ENCODE measurements at regions of chr1 and their contacts with region 1.

Region 1: DNA sequence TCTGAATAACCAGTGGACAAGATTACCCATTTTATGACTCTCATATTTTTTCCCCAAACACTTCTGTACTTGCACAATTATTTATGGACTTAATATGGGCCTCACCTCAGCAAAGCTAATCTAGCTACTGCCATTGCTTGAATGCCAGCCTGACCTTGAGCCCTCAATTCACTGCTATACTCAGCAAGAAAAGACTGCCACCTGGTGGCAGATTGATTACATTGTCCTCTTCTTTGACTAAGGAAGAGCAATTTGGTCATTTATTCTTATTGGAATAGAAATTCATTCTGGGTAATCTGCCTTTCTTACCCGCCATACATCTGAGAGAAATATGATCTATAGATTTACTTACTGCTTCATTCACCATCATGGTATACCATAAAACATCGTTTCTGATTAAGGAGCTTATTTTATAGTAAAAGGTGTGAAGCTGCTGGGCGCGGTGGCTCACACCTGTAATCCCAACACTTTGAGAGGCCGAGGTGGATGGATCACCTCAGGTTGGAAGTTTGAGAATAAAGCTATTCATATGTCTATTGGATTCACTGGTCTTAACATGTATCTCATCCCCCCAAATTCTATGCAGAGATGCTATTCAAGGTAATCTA is 32.9 kb upstream of the DIPK1A start:
- DNase-seq: no peak
- ATAC-seq: peak; percentile 98
- H3K4me3 ChIP-seq: no peak overlapping the region
- H3K27ac ChIP-seq: no peak overlapping the region
- H3K4me1 ChIP-seq: no peaks in the 10 kb centered on the region
- H3K27me3 ChIP-seq: no peaks in the 10 kb centered on the region
- CTCF ChIP-seq: peak; percentile 65 to 81 (median 73)
- EP300 ChIP-seq: no peak
- POLR2A ChIP-seq: no peak
- RAD21 ChIP-seq: peak; percentile 100

Region 2: DNA sequence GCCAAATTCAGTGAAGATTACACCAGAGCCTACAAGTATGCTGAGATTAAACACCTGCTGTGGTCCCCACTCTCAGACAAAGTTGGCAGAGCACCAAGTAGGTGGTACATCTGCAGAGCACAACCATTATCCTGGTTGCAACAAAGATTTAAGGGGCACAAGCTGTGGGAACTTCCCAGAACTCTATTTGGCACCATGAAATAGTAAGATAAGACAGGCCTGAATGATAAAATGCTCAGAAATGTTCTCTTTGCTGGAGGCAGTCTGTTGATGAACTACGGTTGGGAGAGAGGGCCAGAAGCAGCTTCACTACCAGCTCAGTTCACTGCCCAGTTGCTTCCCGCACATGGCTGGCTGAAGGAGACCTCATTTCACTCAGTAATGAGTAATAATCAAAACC is 142.5 kb before region 1 on chr1:
- CTCF ChIA-PET with region 1: interaction called, 165 read pairs
- POLR2A ChIA-PET with region 1: no interaction called
- RAD21 ChIA-PET with region 1: interaction called, 67 read pairs
- SMC1A ChIA-PET with region 1: interaction called, 120 read pairs
- in situ Hi-C with region 1: loop called (anchors 5 kb)
- intact Hi-C with region 1: no loop called
- DNase-seq: no peak
- ATAC-seq: no peak
- H3K4me3 ChIP-seq: no peak overlapping the region
- H3K27ac ChIP-seq: no peak overlapping the region
- H3K4me1 ChIP-seq: peaks cover 6% of the 10 kb centered on the region
- H3K27me3 ChIP-seq: no peaks in the 10 kb centered on the region
- CTCF ChIP-seq: no peak
- EP300 ChIP-seq: no peak
- POLR2A ChIP-seq: no peak
- RAD21 ChIP-seq: no peak

Region 3: GRCh38 chr1:92877792-92878191 is 116.4 kb before region 1 on chr1:
- CTCF ChIA-PET with region 1: interaction called, 17 read pairs
- POLR2A ChIA-PET with region 1: no interaction called
- RAD21 ChIA-PET with region 1: interaction called, 3 read pairs
- SMC1A ChIA-PET with region 1: interaction called, 4 read pairs
- in situ Hi-C with region 1: no loop called
- intact Hi-C with region 1: no loop called
- DNase-seq: no peak
- ATAC-seq: no peak
- H3K4me3 ChIP-seq: peak overlapping the region; percentile 43; the same call in 1 of the 2 replicates
- H3K27ac ChIP-seq: peak overlapping the region; percentile 55
- H3K4me1 ChIP-seq: no peaks in the 10 kb centered on the region; the same call in 1 of the 2 replicates
- H3K27me3 ChIP-seq: no peaks in the 10 kb centered on the region
- CTCF ChIP-seq: no peak
- EP300 ChIP-seq: no peak
- POLR2A ChIP-seq: no peak
- RAD21 ChIP-seq: no peak

Region 4: DNA sequence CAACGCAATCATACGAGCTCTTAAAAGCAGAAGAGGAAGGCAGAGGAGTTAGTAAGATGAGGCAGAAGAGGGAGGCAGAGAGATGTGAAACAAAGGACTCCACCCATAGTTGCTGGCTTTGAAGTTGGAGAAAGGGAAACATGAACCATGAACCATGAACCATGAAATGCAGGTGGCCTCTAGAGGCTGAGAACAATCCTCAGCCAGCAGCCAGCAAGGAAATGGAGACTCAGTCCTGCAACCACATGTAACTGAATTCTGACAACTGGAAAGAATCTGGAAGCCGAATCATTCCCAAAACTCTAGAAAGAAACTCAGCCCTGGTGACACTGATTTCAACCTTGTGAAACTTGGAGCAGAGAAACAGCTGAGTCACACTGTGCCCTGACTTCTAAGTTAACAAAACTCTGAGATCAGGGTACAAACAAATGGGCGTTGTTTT is 43.0 kb before region 1 on chr1:
- CTCF ChIA-PET with region 1: interaction called, 39 read pairs
- POLR2A ChIA-PET with region 1: interaction called, 5 read pairs
- RAD21 ChIA-PET with region 1: interaction called, 133 read pairs
- SMC1A ChIA-PET with region 1: interaction called, 141 read pairs
- in situ Hi-C with region 1: no loop called
- intact Hi-C with region 1: no loop called
- DNase-seq: peak; percentile 79
- ATAC-seq: peak; percentile 80
- H3K4me3 ChIP-seq: 0 out of 2 replicates have a peak overlapping the region, but pooled peaks have one; percentile 0
- H3K27ac ChIP-seq: peak overlapping the region; percentile 79
- H3K4me1 ChIP-seq: peaks cover 37% of the 10 kb centered on the region
- H3K27me3 ChIP-seq: no peaks in the 10 kb centered on the region
- CTCF ChIP-seq: peak in 2 of 3 experiments; percentile 21 to 31; a peak in 3 of 6 replicates
- EP300 ChIP-seq: no peak
- POLR2A ChIP-seq: no peak
- RAD21 ChIP-seq: peak; percentile 29

Region 5: DNA sequence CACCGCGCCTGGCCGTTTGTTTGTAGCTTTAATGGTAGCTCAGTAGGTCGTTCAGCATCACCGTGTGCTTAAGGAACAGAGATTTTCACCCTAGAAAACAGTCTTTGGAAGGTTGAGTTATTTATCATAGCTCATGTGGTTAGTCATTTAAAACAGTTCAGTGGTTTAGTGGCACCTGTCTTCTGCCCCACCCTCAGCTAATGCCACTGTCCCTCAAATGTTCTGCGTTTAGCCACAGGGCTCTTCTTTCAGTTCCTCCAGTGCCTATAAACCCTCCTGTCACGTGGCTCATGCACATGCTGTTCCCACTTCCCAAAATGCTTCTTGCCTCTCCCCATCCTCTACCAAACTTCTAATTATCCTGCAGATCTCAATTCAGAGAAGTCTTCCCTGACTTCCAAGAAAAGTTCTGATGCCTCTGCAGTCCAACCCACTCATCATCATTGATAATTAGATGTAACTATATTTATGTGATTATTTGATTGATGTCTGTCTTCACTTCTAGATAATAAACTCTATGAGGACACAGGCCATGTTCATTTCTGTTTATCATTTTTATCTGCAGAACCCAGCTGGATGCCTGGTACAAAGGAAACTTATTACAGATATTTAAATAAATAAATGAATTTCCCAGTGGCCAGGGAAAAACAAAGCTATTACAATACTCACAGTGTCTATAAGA is 18.5 kb before region 1 on chr1:
- CTCF ChIA-PET with region 1: interaction called, 304 read pairs
- POLR2A ChIA-PET with region 1: interaction called, 13 read pairs
- RAD21 ChIA-PET with region 1: interaction called, 48 read pairs
- SMC1A ChIA-PET with region 1: interaction called, 253 read pairs
- in situ Hi-C with region 1: no loop called
- intact Hi-C with region 1: no loop called
- DNase-seq: peak; percentile 97
- ATAC-seq: peak; percentile 76
- H3K4me3 ChIP-seq: 0 out of 2 replicates have a peak overlapping the region, but pooled peaks have one; percentile 58
- H3K27ac ChIP-seq: peak overlapping the region; percentile 89
- H3K4me1 ChIP-seq: peaks cover 50% of the 10 kb centered on the region
- H3K27me3 ChIP-seq: no peaks in the 10 kb centered on the region
- CTCF ChIP-seq: no peak
- EP300 ChIP-seq: peak; percentile 89 to 92
- POLR2A ChIP-seq: no peak
- RAD21 ChIP-seq: no peak

Region 6: GRCh38 chr1:93015590-93015989 is 21.4 kb after region 1 on chr1:
- CTCF ChIA-PET with region 1: interaction called, 25 read pairs
- POLR2A ChIA-PET with region 1: no interaction called
- RAD21 ChIA-PET with region 1: interaction called, 4 read pairs
- SMC1A ChIA-PET with region 1: interaction called, 11 read pairs
- in situ Hi-C with region 1: no loop called
- intact Hi-C with region 1: no loop called
- DNase-seq: no peak
- ATAC-seq: no peak
- H3K4me3 ChIP-seq: no peak overlapping the region
- H3K27ac ChIP-seq: no peak overlapping the region
- H3K4me1 ChIP-seq: peaks cover 21% of the 10 kb centered on the region
- H3K27me3 ChIP-seq: no peaks in the 10 kb centered on the region
- CTCF ChIP-seq: no peak
- EP300 ChIP-seq: no peak
- POLR2A ChIP-seq: no peak
- RAD21 ChIP-seq: no peak

Region 7: DNA sequence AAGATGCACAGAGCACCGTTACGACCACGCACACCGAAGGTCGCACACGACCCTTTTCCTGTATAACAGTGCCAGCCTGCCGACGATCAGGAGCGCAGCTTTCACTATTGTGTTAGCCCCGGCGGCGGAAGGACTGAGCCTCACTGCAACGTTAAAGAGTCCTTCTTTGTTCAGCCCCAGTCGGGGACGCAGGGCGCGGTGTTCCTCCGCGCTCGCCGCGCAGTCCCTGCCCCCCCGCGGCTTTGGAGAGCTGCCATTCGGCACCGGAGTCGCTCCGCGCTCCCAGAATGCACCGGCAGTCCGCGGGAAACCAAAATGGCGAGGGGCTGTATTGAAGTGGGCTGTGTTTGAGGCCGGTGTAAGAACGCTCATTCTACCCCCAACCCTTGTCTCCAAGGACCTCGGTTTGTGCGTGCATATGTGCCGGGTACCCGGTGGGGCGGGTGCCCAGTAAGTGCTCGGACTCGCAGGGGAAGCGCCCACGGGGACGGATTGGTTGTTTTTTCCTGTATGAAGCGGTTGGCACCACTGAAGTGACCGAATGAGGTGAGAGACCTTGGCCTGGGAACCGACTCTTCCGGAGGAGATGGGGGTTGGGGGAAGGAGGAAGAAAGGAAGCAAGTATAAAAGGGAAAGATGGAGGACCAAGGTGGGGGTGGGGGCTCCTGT is 84.9 kb after region 1 on chr1 and contains the start of gene MTF2:
- CTCF ChIA-PET with region 1: interaction called, 10 read pairs
- POLR2A ChIA-PET with region 1: no interaction called
- RAD21 ChIA-PET with region 1: no interaction called
- SMC1A ChIA-PET with region 1: interaction called, 3 read pairs
- in situ Hi-C with region 1: no loop called
- intact Hi-C with region 1: no loop called
- DNase-seq: peak; percentile 84
- ATAC-seq: peak; percentile 84
- H3K4me3 ChIP-seq: peak within 1 kb of the TSS; percentile 96
- H3K27ac ChIP-seq: peak within 1 kb of the TSS; percentile 93
- H3K4me1 ChIP-seq: no peaks in the 10 kb centered on the region
- H3K27me3 ChIP-seq: no peaks in the 10 kb centered on the region
- CTCF ChIP-seq: 0 out of 6 replicates have a peak, but pooled peaks of 1 of the 3 experiments have one; percentile 1
- EP300 ChIP-seq: peak; percentile 42 to 48; a peak in 3 of 4 replicates
- POLR2A ChIP-seq: peak; percentile 97
- RAD21 ChIP-seq: no peak
- polyA plus RNA-seq, gene MTF2: 22.6 to 30.6 TPM

Region 8: GRCh38 chr1:93093332-93094006 is 99.3 kb after region 1 on chr1:
- CTCF ChIA-PET with region 1: no interaction called
- POLR2A ChIA-PET with region 1: no interaction called
- RAD21 ChIA-PET with region 1: no interaction called
- SMC1A ChIA-PET with region 1: no interaction called
- in situ Hi-C with region 1: no loop called
- intact Hi-C with region 1: no loop called
- DNase-seq: no peak
- ATAC-seq: peak; percentile 56
- H3K4me3 ChIP-seq: no peak overlapping the region
- H3K27ac ChIP-seq: no peak overlapping the region
- H3K4me1 ChIP-seq: no peaks in the 10 kb centered on the region
- H3K27me3 ChIP-seq: no peaks in the 10 kb centered on the region
- CTCF ChIP-seq: no peak
- EP300 ChIP-seq: no peak
- POLR2A ChIP-seq: no peak
- RAD21 ChIP-seq: no peak

Measured in GM12878 (cell line).